Right ventricle myocardium inferior (tissue), 1 donor: ENCODE measurements at regions of chr1 and their contacts with region 1.

Region 1: DNA sequence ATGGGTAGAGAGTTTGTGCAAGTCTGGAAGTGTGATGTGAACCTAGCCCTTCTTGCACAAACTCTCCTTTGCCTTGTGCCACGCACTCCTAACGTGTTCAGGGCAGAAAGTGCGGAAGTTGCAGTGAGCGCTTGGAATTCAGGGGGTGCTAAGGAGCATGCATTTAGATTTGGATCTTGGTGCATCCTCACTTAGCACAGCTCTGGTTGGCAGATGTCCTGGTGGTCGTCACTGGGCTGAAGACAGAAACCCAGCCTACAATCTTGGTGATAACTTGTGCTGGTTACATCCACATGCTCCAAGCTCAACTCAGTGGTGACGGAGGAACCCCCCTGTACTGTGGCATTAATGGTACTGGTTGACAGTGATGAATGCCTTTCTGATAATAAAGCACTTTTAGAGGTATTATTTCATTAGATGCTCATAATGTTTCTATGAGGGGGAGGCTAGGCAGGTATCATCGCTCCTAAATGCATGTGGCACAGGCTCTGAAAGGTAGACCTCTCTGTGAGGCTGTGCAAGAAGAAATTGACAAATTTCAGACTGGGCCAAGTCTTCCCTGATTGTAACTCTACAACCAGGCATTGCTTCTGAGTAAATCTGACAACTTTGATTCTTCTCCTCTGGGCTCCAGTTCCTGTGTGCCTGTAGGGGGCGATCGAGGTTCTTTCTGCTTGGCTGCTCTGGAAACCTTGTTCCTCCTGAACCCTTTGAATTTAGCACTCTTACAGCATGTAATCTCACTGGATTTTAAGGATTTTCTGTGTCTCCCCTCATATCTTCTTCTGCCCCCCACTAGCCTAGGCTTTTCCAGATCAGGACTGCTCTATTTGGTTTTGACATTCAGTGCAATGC is 40.6 kb downstream of the MAPKAPK2 start:
- DNase-seq: no peak
- ATAC-seq: no peak

Region 2: DNA sequence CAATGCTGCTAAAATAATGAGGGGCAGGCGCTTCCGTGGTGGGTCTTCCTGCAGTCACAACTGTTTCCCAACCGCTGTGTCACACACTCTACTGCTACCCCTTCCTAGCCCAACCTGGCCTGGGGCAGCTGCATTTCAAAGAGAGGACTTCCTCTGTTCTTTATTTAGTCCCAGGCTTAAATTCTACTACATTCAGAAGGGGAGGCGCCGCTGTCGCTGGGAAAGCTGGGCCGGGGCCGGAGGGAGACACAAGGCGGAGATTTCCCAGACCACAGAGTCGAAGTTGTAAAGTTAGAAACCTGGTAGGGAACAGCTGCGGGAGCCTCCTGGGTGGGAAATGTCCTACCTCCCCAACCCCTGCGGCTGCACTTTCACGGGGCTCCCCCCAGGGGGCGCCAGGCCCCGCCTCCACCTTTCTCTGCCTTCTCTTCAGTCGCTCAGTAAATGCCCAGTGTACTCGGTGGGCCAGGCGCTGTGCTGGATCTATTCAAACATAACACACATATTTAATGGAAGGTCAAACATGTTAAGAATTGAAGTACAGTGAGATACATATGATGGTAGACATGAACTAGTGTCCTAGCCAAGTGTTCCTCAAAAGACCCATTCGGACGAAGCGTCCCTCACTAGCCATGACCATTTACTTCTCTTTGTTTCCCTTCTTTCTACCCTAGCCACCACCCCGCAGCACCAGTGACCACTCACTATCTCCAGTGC is 66.9 kb before region 1 on chr1:
- intact Hi-C with region 1: loop called (anchors 2 kb)
- DNase-seq: peak; percentile 78
- ATAC-seq: peak; percentile 46

Region 3: DNA sequence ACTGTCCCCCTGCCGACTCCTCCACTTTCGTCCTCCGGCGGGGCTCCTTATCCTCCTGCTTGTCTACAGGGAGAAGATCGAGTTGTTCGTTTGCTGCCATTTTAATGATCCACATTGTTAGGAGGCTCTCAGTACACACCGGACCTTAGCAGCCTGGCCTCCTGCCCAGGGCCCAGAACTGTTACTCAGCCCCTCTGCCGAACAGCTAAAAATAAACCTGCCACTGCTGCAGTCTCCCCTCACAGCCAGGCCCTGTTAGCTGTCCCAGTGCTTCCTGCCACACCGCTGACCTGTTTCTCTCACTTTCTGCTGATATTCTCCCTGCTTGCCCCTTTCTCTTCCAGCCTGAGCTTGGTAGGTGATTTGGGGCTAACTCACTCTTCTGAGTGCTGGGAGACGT is 32.3 kb before region 1 on chr1:
- intact Hi-C with region 1: loop called (anchors 2 kb)
- DNase-seq: peak; percentile 87
- ATAC-seq: peak; percentile 83

Region 4: DNA sequence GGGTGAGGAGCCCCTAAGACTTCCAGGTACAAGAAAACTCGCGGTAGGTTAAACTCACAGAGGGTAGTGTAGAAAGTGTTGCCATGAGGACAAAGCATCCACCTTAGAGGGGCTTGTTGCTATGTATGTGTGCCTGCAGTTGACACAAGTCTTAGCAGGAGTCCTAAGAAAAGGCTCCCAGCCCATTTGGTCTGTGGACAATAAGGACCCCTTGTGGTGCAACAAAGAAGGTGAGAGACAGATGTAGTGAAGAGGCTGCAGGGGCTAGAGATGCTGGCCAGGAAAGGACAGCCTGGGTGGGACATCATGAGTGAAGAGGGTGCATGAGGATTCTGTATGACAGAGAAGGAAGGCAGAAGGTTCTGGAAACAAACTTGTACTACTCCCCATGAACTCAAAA is 83.3 kb after region 1 on chr1:
- intact Hi-C with region 1: loop called (anchors 5 kb)
- DNase-seq: no peak
- ATAC-seq: peak; percentile 68

Region 5: GRCh38 chr1:206826405-206826804 is 101.1 kb after region 1 on chr1:
- intact Hi-C with region 1: no loop called
- DNase-seq: no peak
- ATAC-seq: no peak